Mammary epithelial cell (primary cell): ENCODE measurements at regions of chr2 and their contacts with region 1.

Region 1: GRCh38 chr2:47850198-47850597 is 56.1 kb downstream of the FBXO11 start:
- DNase-seq: no peak
- H3K4me3 ChIP-seq: no peak overlapping the region
- H3K27ac ChIP-seq: no peak overlapping the region
- H3K4me1 ChIP-seq: no peaks in the 10 kb centered on the region
- H3K27me3 ChIP-seq: no peaks in the 10 kb centered on the region
- CTCF ChIP-seq: no peak

Region 2: GRCh38 chr2:47386551-47386950 is 463.6 kb before region 1 on chr2:
- CTCF ChIA-PET with region 1: no interaction called
- dilution Hi-C with region 1: no loop called
- in situ Hi-C with region 1: no loop called
- intact Hi-C with region 1: no loop called
- DNase-seq: no peak
- H3K4me3 ChIP-seq: no peak overlapping the region
- H3K27ac ChIP-seq: no peak overlapping the region
- H3K4me1 ChIP-seq: no peaks in the 10 kb centered on the region
- H3K27me3 ChIP-seq: no peaks in the 10 kb centered on the region
- CTCF ChIP-seq: no peak

Region 3: DNA sequence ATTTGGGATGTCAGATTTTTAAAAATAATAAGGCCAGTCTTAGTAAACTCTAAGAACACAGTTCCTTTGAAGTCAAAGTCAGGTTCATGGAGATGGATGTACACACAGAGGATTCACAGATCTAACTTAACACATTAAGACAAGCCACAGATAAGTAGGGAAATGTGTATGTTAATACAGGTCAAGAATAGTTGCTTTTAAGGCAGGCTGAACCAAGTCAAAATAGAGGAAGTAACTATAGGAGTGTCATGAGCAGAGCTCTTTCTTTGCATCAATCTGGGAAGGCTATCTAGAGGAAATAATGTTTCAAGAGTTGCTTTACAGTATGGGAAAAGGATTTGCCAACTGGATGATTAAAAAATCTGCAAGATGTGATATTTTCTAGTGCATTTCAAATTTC is 184.1 kb after region 1 on chr2:
- CTCF ChIA-PET with region 1: no interaction called
- dilution Hi-C with region 1: no loop called
- in situ Hi-C with region 1: no loop called
- intact Hi-C with region 1: no loop called
- DNase-seq: no peak
- H3K4me3 ChIP-seq: no peak overlapping the region
- H3K27ac ChIP-seq: no peak overlapping the region
- H3K4me1 ChIP-seq: no peaks in the 10 kb centered on the region
- H3K27me3 ChIP-seq: no peaks in the 10 kb centered on the region
- CTCF ChIP-seq: no peak

Region 4: GRCh38 chr2:48092846-48093803 is 242.9 kb after region 1 on chr2:
- CTCF ChIA-PET with region 1: no interaction called
- dilution Hi-C with region 1: no loop called
- in situ Hi-C with region 1: loop called in 1 of 2 experiments (anchors 10 kb)
- intact Hi-C with region 1: no loop called
- DNase-seq: no peak
- H3K4me3 ChIP-seq: no peak overlapping the region
- H3K27ac ChIP-seq: no peak overlapping the region
- H3K4me1 ChIP-seq: no peaks in the 10 kb centered on the region
- H3K27me3 ChIP-seq: no peaks in the 10 kb centered on the region
- CTCF ChIP-seq: no peak